BJ (cell line): ENCODE measurements at regions of chr1 and their contacts with region 1.

Region 1: DNA sequence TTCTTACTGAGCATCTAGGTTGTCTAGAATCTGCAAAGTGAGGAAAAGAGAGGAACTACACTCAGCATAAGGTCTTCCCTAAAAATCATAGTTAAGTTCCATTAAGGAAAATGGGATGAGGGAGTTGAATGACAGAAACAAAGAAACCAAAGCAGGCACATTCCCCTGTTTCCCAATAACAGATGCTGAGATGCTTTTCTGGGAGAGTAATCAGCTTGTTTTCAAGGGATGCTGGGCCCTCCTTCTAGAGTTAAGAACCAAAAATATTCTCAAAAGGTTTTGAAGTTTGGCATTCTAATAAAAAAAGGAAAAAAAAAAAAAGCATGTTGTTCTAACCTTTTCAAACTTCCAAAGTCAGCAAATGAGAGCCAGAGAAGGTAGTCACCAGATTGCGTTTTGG is 105.2 kb upstream of the ZNF648 start:
- DNase-seq: no peak
- H3K4me3 ChIP-seq: no peak overlapping the region
- H3K27me3 ChIP-seq: no peaks in the 10 kb centered on the region
- CTCF ChIP-seq: no peak

Region 2: GRCh38 chr1:182193908-182194550 is 27.3 kb after region 1 on chr1:
- CTCF ChIA-PET with region 1: no interaction called
- POLR2A ChIA-PET with region 1: interaction called, 13 read pairs
- DNase-seq: peak; percentile 67
- H3K4me3 ChIP-seq: no peak overlapping the region
- H3K27me3 ChIP-seq: peaks cover 5% of the 10 kb centered on the region
- CTCF ChIP-seq: no peak